Calu3 (cell line): ENCODE measurements at regions of chr22 and their contacts with region 1.

Region 1: DNA sequence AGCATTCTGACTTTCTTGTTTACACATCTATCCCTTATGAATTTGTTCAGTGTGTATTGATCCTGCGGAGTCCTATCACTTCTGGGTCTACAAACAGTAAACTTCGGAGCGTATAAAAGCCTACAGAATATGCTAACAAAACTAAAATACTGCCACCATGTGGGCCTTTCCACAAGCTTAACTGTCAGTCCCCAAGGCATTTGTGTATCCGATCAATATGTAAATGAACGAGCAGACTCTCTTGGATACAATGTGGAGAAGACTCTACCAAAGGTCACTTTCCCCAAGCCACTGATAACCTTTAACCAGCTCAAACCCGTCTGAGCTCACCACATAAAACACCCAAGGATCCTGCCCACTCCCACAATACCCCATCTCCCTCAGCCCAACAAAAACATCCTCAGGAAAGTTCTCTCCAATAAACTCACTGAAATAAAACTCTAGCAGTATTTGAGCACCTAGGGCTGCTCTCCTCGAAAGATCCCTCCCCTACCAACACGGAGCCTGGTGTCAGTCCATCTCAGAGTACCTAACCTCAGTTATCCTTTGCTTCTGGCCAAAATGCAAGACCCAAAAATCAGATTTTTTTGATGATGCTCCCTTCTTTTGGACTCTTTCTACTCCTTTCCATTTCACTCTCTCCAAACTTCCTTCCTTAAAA is 17.8 kb downstream of the ADA2 start:
- DNase-seq: peak; percentile 32
- H3K4me3 Mint-ChIP-seq: no peak overlapping the region
- H3K27ac Mint-ChIP-seq: no peak overlapping the region
- H3K4me1 Mint-ChIP-seq: peaks cover 14% of the 10 kb centered on the region
- H3K27me3 Mint-ChIP-seq: peaks cover 71% of the 10 kb centered on the region
- CTCF ChIP-seq: peak; percentile 31

Region 2: DNA sequence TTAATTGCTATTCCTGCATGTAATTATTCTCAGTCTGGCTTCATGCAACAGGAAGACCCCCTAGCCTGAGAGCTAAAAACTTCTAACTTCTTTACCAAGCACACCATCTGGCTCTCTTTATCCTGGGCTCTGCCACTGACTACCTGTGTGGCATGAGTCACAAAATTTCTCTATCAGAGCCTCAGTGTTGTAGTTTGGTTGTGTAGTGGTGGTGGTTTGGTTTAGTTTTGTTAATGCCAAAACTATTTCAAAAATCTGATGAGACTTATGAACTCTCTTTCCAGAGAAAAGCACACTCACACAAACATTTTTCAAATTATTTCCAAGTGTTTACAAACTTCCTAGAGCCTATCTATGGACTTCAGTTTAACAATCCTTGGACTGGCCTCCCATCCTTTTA is 124.2 kb before region 1 on chr22:
- CTCF ChIA-PET with region 1: interaction called, 9 read pairs
- intact Hi-C with region 1: loop called (anchors 2 kb)
- DNase-seq: no peak
- H3K4me3 Mint-ChIP-seq: no peak overlapping the region
- H3K27ac Mint-ChIP-seq: no peak overlapping the region
- H3K4me1 Mint-ChIP-seq: no peaks in the 10 kb centered on the region
- H3K27me3 Mint-ChIP-seq: peaks cover 23% of the 10 kb centered on the region
- CTCF ChIP-seq: no peak

Region 3: GRCh38 chr22:17322511-17322910 is 121.1 kb after region 1 on chr22:
- CTCF ChIA-PET with region 1: no interaction called
- intact Hi-C with region 1: loop called (anchors 10 kb)
- DNase-seq: no peak
- H3K4me3 Mint-ChIP-seq: no peak overlapping the region
- H3K27ac Mint-ChIP-seq: no peak overlapping the region
- H3K4me1 Mint-ChIP-seq: no peaks in the 10 kb centered on the region
- H3K27me3 Mint-ChIP-seq: peaks cover 33% of the 10 kb centered on the region
- CTCF ChIP-seq: no peak